Naive thymus-derived CD8-positive, alpha-beta T cell (primary cell): ENCODE measurements at regions of chr16 and their contacts with region 1.

Region 1: DNA sequence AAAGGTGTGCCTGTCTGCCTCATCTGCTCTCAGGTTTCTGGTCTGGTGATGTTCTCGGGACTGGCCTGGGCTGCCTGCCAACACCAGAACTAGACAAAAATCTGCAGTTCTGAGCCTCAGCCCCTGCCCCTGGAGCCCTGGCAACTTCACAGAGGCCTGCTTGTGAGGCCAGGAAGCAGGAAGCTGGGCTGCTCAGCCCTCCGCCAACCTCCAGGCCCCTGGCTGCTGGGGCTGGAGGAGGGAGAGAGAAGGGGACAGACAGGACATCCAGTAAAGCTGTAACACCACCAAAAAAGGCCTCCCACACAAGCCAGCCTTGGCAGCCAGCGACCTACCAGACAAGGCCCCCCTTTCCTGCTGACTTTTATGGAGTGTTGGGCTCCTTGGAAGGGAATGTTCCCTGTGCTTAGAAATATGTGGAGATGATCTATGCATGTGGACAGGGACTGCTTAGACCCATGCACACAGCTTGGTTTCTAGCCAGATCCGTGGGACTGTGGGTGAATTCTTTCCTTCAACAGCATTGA is 157.6 kb downstream of the XYLT1 start:
- DNase-seq: no peak
- ATAC-seq: peak in 1 of 2 donors; percentile 35
- H3K4me3 Mint-ChIP-seq: no peak overlapping the region
- H3K27ac Mint-ChIP-seq: peak overlapping the region in 8 of 10 donors; percentile 29 to 82 (median 50)
- H3K4me1 Mint-ChIP-seq: peaks cover 15 to 66% (median 38%) of the 10 kb centered on the region in 4 donors
- H3K27me3 Mint-ChIP-seq: no peaks in the 10 kb centered on the region

Region 2: GRCh38 chr16:17230932-17231581 is 82.1 kb before region 1 on chr16:
- POLR2A ChIA-PET with region 1: interaction called, 11 read pairs
- DNase-seq: no peak
- ATAC-seq: no peak
- H3K4me3 Mint-ChIP-seq: no peak overlapping the region
- H3K27ac Mint-ChIP-seq: peak overlapping the region in 4 of 10 donors; percentile 4 to 75 (median 41)
- H3K4me1 Mint-ChIP-seq: peaks cover 12 to 39% (median 13%) of the 10 kb centered on the region in 4 donors
- H3K27me3 Mint-ChIP-seq: no peaks in the 10 kb centered on the region